ENCODE measurements at regions of chr3 and their contacts with region 1.

Region 1: DNA sequence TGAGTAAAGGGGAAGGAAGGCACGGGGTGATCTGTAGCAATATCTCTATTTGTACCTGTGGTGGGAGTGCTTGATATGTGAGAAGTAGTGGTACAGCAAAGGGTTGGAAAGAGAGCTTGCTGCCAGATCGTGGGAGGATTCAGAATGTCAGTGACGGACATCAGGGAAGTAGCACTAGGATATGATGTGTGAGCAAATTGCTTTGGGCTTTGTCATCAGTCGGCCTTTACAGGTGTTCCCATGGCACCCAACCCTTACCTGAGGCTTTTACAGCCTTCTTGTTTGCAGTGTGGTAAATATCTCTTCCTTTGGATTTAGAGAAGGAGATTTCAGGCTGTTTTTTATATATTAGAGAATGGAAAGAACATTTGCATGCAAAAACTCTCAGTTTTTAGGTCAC is 29.8 kb downstream of the IL1RAP start:
- DNase-seq: no peak
- ATAC-seq: no peak
- H3K4me3 ChIP-seq: no peak overlapping the region
- H3K27ac ChIP-seq: no peak overlapping the region
- H3K4me1 ChIP-seq: peaks cover 88% of the 10 kb centered on the region
- H3K27me3 ChIP-seq: no peaks in the 10 kb centered on the region
- CTCF ChIP-seq: no peak
- EP300 ChIP-seq: no peak
- POLR2A ChIP-seq: no peak
- RAD21 ChIP-seq: no peak

Region 2: GRCh38 chr3:190339130-190339529 is 204.5 kb before region 1 on chr3:
- CTCF ChIA-PET with region 1: no interaction called
- POLR2A ChIA-PET with region 1: no interaction called
- in situ Hi-C with region 1: no loop called
- intact Hi-C with region 1: loop called (anchors 10 kb)
- DNase-seq: peak; percentile 37
- ATAC-seq: peak; percentile 78
- H3K4me3 ChIP-seq: no peak overlapping the region
- H3K27ac ChIP-seq: no peak overlapping the region
- H3K4me1 ChIP-seq: peaks cover 30% of the 10 kb centered on the region
- H3K27me3 ChIP-seq: no peaks in the 10 kb centered on the region
- CTCF ChIP-seq: peak; percentile 28
- EP300 ChIP-seq: no peak
- POLR2A ChIP-seq: no peak
- RAD21 ChIP-seq: no peak

Measured in HepG2 (cell line).